T-cell (primary cell): ENCODE measurements at regions of chr17 and their contacts with region 1.

Region 1: DNA sequence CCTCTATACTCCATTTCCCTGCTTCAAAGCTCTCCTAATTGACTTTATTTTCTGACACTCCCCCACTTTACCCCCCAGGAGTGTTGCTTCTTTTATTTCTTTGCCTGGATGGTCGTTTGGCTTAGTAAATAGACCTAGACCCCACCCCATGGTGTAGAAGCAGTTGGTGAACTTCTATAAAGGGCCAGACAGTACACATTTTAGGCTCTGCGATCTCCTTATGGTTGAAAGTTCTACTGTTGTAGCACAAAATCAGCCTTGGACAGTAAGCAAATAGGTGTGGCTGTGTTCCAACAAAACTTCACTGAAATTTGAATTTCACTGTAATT is 31.9 kb downstream of the ZNF287 start:
- DNase-seq: no peak
- ATAC-seq: no peak
- H3K4me3 ChIP-seq: no peak overlapping the region
- H3K4me3 Mint-ChIP-seq: peak overlapping the region; percentile 94 to 98 (median 97)
- H3K27ac ChIP-seq: peak overlapping the region; percentile 48
- H3K27ac Mint-ChIP-seq: peak overlapping the region; percentile 96 to 98
- H3K4me1 ChIP-seq: peaks cover 0 to 13% of the 10 kb centered on the region in 2 experiments
- H3K4me1 Mint-ChIP-seq: peaks cover 17 to 25% (median 21%) of the 10 kb centered on the region in 3 donors
- H3K27me3 ChIP-seq: no peaks in the 10 kb centered on the region
- H3K27me3 Mint-ChIP-seq: no peaks in the 10 kb centered on the region

Region 2: DNA sequence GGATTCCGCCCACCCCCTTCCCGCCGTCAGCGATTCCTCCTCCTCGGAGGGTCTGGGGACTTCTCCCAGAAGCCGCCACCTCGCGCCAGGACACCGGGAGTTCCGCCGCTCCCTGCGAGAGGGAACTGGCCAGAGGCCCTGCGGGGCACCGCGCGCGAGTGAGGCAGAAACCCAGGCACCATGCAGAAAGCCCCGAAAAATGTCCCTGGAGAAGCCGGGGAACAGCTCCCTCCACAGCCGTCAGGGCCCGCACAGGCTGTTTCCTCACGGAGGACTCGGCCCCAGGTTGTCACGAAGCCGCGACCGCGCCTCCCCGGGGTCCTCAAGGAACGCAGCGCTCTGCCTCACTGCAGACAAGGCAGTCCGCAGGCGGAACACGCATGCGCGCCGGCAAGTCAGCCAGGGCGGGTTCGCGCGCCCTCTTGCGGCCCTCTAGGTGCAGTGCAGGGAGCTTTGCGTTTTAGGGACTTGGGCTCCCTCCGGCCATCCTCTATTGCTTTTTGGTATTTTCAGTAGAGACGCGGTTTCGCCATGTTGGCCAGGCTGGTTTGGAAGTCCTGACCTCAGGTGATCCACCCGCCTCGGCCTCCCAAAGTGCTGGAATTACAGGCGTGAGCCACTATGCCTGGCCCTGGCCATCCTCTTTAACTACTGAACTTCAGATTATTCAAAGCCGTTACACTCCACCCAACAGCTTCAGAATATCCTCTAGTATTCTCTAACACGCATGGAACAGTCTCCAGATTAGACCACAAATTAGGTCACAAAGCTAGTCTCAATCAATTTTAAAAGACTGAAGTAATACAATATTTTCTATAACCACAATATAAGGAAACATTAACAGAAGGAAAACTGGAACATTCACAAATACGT is 52.2 kb after region 1 on chr17:
- CTCF ChIA-PET with region 1: interaction called, 10 to 24 read pairs
- POLR2A ChIA-PET with region 1: interaction called in 1 of 2 experiments, 9 read pairs
- DNase-seq: peak; percentile 77 to 96 (median 89)
- ATAC-seq: peak; percentile 80 to 97 (median 83)
- H3K4me3 ChIP-seq: peak overlapping the region; percentile 61 to 80
- H3K4me3 Mint-ChIP-seq: peak overlapping the region; percentile 70 to 75 (median 74)
- H3K27ac ChIP-seq: no peak overlapping the region
- H3K27ac Mint-ChIP-seq: peak overlapping the region in 1 of 2 donors; percentile 57
- H3K4me1 ChIP-seq: peaks cover 0 to 15% of the 10 kb centered on the region in 2 experiments
- H3K4me1 Mint-ChIP-seq: peaks cover 6 to 10% (median 9%) of the 10 kb centered on the region in 3 donors
- H3K27me3 ChIP-seq: peaks cover 15 to 19% of the 10 kb centered on the region in 2 experiments
- H3K27me3 Mint-ChIP-seq: peaks cover 25 to 26% of the 10 kb centered on the region in 2 donors